ENCODE measurements at regions of chr21 and their contacts with region 1.

Region 1: DNA sequence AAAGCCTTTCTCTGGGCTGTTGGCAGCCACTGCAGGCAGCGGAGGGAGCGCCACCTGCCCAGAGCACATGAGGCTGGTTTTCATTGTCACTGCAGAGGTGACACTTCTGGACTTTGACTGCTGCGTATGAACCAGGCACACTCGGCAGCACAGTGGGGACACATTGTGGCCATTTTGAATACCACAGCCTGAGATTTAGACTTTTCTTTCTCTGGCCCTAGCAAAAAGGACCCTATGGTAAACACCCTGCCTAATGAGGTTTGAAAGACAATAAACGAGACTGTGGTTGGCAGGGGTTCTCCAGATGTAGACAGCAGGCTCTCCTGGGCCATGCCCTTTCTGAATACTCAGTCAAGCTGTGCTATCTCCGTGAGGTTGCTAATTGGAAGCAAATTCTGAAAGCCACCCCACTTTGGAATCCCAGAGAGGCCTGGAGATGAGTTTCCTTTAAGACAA is 12.0 kb upstream of the KCNE2 start:
- DNase-seq: peak; percentile 26
- ATAC-seq: peak; percentile 91
- H3K4me3 ChIP-seq: no peak overlapping the region
- H3K27ac ChIP-seq: no peak overlapping the region
- H3K4me1 ChIP-seq: no peaks in the 10 kb centered on the region; the same call in 1 of the 2 replicates
- H3K27me3 ChIP-seq: peaks cover 20% of the 10 kb centered on the region
- CTCF ChIP-seq: peak; percentile 67
- POLR2A ChIP-seq: no peak
- RAD21 ChIP-seq: peak; percentile 83

Region 2: DNA sequence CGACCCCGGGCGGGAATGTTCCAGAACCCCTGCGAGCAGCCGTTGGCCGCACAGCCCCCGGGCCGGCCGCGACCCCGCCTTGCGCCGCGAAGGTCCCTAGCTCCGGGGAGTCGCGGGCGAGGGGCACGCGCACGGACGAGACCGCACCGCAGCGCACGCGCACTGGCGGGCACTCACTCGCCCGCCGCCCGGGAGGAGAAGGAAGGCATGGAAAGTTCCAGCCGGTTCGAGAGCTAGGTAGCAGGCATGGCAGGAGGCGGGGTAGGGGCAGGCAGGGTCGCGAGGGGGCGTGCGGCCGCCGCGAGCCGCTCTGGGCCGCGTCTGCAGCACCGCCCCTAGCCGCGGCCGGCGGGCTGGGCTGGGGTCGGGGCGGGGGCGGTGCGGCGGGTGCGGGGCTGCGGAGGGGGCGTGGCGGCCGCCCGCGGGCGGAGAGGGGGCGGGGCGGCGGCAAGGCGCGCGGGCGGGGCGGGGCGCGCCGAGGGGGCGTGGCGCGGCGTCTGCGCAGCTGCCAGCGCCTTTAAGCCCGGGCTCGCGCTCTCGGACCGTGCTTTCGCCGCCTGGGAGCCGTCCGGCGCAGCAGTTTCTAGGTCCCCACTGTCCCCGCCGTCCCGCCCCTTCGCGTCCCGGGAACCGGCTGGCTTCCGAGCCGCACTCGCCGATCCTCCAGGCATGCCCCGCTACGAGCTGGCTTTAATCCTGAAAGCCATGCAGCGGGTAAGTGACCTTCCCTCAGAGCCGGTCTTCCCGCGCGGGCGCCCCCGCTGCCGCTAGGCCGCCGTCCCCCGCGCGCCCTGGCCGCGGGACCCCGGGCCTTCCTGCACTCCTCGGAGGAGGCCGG is 278.6 kb before region 1 on chr21 and contains the starts of genes MRPS6 and SLC5A3:
- CTCF ChIA-PET with region 1: no interaction called
- POLR2A ChIA-PET with region 1: no interaction called
- dilution Hi-C with region 1: no loop called
- in situ Hi-C with region 1: no loop called
- intact Hi-C with region 1: loop called (anchors 2 kb)
- DNase-seq: peak; percentile 81
- ATAC-seq: peak; percentile 88
- H3K4me3 ChIP-seq: peak within 1 kb of the TSS; percentile 100
- H3K27ac ChIP-seq: peak within 1 kb of the TSS; percentile 87
- H3K4me1 ChIP-seq: peaks cover 3% of the 10 kb centered on the region; the same call in 1 of the 2 replicates
- H3K27me3 ChIP-seq: peaks cover 5% of the 10 kb centered on the region; the same call in 1 of the 2 replicates
- CTCF ChIP-seq: peak; percentile 26; the same call in 1 of the 2 replicates
- POLR2A ChIP-seq: peak; percentile 89
- RAD21 ChIP-seq: 0 out of 2 replicates have a peak, but pooled peaks have one; percentile 7
- total RNA-seq, gene MRPS6: 7.5 and 11.9 TPM in 2 replicates
- total RNA-seq, gene SLC5A3: 9.9 and 15.6 TPM in 2 replicates

Region 3: GRCh38 chr21:34129039-34129891 is 222.5 kb before region 1 on chr21:
- CTCF ChIA-PET with region 1: interaction called, 4 read pairs
- POLR2A ChIA-PET with region 1: no interaction called
- dilution Hi-C with region 1: no loop called
- in situ Hi-C with region 1: no loop called
- intact Hi-C with region 1: loop called (anchors 2 kb)
- DNase-seq: peak; percentile 92
- ATAC-seq: peak; percentile 92
- H3K4me3 ChIP-seq: peak overlapping the region; percentile 20; the same call in 1 of the 2 replicates
- H3K27ac ChIP-seq: peak overlapping the region; percentile 90
- H3K4me1 ChIP-seq: peaks cover 30% of the 10 kb centered on the region
- H3K27me3 ChIP-seq: no peaks in the 10 kb centered on the region
- CTCF ChIP-seq: peak; percentile 63
- POLR2A ChIP-seq: no peak
- RAD21 ChIP-seq: peak; percentile 51

Region 4: GRCh38 chr21:34570313-34570712 is 218.5 kb after region 1 on chr21:
- CTCF ChIA-PET with region 1: no interaction called
- POLR2A ChIA-PET with region 1: no interaction called
- dilution Hi-C with region 1: no loop called
- in situ Hi-C with region 1: no loop called
- intact Hi-C with region 1: no loop called
- DNase-seq: no peak
- ATAC-seq: no peak
- H3K4me3 ChIP-seq: no peak overlapping the region
- H3K27ac ChIP-seq: no peak overlapping the region
- H3K4me1 ChIP-seq: peaks cover 2% of the 10 kb centered on the region; the same call in 1 of the 2 replicates
- H3K27me3 ChIP-seq: no peaks in the 10 kb centered on the region
- CTCF ChIP-seq: no peak
- POLR2A ChIP-seq: no peak
- RAD21 ChIP-seq: no peak